Gastrocnemius medialis (tissue), 4 donors: ENCODE measurements at regions of chr16 and their contacts with region 1.

Region 1: DNA sequence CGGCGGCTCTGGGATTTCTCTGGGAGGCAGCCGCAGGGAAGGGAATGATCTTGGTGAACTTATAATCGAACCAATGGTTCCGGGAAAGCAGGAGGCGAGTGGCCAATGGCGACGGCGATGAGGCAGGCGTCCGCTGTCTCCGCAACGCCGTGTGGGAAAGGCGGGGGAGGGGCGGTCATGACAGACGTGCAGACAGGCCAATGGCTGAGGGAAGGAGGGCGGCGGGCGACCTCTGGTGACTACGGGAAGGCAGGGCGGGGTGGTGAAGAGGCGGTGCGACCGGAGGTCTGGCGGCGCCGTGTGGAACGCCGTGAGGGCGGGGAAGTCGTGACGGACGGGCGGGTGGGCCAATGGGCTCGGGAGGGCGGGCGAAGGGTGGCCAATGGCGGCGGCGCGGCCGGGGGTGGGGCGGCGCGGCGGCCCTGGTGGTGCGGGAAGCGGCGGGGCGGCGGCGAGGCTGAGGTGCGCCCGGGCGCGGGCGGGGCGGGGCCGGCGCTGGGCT is at the start of gene RAB40C:
- DNase-seq: peak; percentile 99
- ATAC-seq: peak; percentile 60 to 72
- H3K4me3 ChIP-seq: peak within 1 kb of the TSS; percentile 89 to 94 (median 90)
- H3K27ac ChIP-seq: peak within 1 kb of the TSS; percentile 96 to 99 (median 98)
- H3K4me1 ChIP-seq: peaks cover 61 to 66% of the 10 kb centered on the region in 2 donors
- H3K27me3 ChIP-seq: no peaks in the 10 kb centered on the region
- CTCF ChIP-seq: no peak
- POLR2A ChIP-seq: no peak
- total RNA-seq, gene RAB40C: 15.6 to 29.3 (median 21.4) TPM

Region 2: DNA sequence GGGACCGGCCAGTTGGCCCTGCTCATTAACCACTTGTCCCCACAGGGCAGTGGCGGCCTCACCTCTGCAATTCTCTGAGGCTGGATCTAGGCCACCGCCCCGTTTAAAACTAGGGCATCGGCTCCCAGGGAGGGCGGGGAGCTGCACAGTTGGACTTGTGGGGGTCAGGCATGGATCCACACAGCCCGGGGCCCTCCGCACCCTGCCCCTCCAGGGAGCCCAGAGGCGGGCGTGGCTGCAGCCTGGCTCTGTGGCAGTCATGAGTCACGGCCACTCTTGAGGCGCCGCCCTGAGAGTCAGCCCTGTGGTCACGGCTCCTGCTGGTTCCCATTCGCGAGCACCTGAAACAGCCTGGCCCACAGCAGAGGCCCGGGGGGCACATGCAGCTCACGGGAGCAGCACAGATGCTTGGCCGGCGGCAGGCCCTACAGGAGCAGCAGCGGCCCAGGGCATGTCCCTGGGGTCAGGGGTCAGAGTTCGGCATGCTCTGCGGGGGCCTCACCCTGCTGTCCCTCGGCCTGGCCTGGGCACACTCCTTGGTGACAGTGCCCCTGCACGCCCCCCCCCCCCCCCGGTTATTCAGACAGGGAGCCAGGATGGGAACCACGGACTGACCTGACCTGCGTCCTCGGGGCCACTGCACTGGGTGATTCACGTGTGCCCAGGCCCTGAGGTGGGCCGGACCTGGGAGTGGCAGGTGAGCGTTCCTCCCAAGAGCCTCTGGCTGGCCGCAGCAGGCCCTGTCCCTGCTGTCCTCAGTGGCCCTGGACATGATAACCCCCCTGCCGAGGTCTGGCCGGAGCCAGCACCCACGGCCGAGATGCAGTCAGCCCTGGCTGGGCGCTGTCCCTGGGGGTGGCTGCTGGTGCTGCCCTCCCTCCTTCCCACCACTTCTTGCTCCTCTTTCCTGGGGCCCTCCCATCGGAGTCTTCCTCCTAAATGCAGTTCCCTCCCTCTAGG is 54.0 kb before region 1 on chr16:
- in situ Hi-C with region 1: no loop called
- intact Hi-C with region 1: loop called (anchors 1 kb)
- DNase-seq: peak; percentile 85 to 89
- ATAC-seq: peak; percentile 74 to 77
- H3K4me3 ChIP-seq: peak overlapping the region; percentile 17 to 31 (median 28)
- H3K27ac ChIP-seq: peak overlapping the region; percentile 82 to 94 (median 92)
- H3K4me1 ChIP-seq: peaks cover 38 to 40% of the 10 kb centered on the region in 2 donors
- H3K27me3 ChIP-seq: no peaks in the 10 kb centered on the region
- CTCF ChIP-seq: peak in 2 of 5 experiments; percentile 5 to 28
- POLR2A ChIP-seq: peak; percentile 53 to 63

Region 3: DNA sequence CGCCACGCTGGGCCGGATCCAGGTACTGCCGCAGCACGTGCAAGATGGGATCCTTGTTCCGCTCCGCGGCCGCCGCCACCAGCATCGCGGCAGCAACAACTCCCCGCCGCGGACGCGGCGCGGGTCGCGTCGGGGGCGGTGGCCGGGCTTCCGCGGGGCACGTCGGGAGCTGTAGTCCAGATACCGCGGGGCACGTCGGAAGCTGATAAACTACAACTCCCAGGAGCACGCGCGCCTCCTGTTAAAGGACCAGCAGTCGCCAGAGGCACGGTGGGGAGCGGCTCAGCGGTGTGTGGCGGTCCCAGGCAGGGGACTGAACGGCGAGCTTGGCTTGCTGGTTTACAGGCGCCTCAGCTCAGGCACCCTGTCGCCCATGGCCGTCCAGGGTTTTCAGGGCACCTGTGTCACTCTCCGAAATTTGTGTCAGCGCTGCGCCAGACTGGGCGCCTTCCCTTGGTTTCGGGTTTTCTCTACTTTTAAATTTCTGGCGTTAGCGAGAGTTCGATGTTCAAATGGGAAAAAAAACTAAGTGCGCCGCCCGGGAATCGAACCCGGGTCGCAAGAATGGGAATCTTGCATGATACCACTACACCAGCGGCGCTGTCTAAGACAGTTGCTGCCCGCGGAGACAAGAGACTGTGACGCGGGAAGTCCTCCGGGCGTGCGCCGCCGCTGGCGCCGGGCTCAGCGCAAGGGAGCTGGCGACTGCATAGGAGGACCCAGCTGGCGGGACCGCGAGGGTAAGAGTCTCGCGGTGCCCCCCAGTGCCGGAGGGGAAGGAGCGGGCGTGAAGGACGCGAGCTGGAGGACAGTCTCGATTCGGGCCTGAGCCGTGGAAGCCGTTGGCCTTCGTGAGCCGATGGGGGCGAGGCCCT is 46.7 kb after region 1 on chr16 and contains the start of gene METTL26:
- in situ Hi-C with region 1: no loop called
- intact Hi-C with region 1: loop called (anchors 1 kb)
- DNase-seq: peak; percentile 94 to 97
- ATAC-seq: peak; percentile 86 to 89
- H3K4me3 ChIP-seq: peak within 1 kb of the TSS; percentile 81 to 98 (median 96)
- H3K27ac ChIP-seq: peak within 1 kb of the TSS; percentile 94 to 100 (median 98)
- H3K4me1 ChIP-seq: peaks cover 11 to 24% of the 10 kb centered on the region in 2 donors
- H3K27me3 ChIP-seq: no peaks in the 10 kb centered on the region
- CTCF ChIP-seq: no peak
- POLR2A ChIP-seq: peak; percentile 66 to 68
- total RNA-seq, gene METTL26: 114 to 212 (median 141) TPM